ENCODE measurements at regions of chr7 and their contacts with region 1.

Region 1: GRCh38 chr7:6160191-6160623 is 112.2 kb downstream of the CYTH3 start:
- DNase-seq: peak; percentile 69
- H3K4me3 ChIP-seq: peak overlapping the region; percentile 22
- H3K27ac ChIP-seq: peak overlapping the region; percentile 87
- H3K4me1 ChIP-seq: peaks cover 60% of the 10 kb centered on the region
- H3K27me3 ChIP-seq: no peaks in the 10 kb centered on the region
- CTCF ChIP-seq: peak; percentile 84

Region 2: GRCh38 chr7:5755704-5756504 is 404.3 kb before region 1 on chr7:
- intact Hi-C with region 1: no loop called
- DNase-seq: no peak
- H3K4me3 ChIP-seq: no peak overlapping the region
- H3K27ac ChIP-seq: no peak overlapping the region
- H3K4me1 ChIP-seq: peaks cover 8% of the 10 kb centered on the region
- H3K27me3 ChIP-seq: no peaks in the 10 kb centered on the region
- CTCF ChIP-seq: no peak

Region 3: DNA sequence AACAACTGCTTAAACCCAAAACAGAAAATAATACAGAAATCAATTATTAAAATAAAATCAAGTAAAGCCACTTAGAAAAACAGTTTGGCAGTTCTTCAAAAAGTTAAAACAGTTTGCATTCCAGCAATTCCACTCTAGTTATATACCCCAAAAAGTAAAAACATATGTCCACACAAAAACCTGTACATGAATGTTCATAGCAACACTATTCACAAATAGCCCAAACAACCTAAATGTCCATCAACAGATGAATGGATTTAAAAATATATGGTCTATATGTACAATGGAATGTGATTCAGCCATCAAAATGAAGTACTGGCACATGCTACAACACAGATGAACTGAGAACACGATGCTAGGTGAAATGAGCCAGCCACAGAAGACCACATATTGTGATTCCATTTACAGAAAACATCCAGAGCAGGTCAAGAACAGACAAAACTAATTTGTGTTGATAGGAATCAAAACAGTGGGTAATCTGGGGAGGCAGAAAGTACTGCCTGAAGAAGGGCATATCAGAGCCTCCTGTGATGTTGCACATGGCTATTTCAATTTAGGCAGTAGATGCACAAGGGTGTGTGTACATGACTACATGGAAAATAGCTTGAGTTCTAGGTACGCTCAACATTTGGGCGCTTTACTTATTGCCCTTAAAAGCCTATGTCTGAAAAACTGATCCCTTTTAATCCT is 45.9 kb after region 1 on chr7:
- intact Hi-C with region 1: no loop called
- DNase-seq: no peak
- H3K4me3 ChIP-seq: no peak overlapping the region
- H3K27ac ChIP-seq: peak overlapping the region; percentile 25
- H3K4me1 ChIP-seq: peaks cover 71% of the 10 kb centered on the region
- H3K27me3 ChIP-seq: no peaks in the 10 kb centered on the region
- CTCF ChIP-seq: no peak

Region 4: DNA sequence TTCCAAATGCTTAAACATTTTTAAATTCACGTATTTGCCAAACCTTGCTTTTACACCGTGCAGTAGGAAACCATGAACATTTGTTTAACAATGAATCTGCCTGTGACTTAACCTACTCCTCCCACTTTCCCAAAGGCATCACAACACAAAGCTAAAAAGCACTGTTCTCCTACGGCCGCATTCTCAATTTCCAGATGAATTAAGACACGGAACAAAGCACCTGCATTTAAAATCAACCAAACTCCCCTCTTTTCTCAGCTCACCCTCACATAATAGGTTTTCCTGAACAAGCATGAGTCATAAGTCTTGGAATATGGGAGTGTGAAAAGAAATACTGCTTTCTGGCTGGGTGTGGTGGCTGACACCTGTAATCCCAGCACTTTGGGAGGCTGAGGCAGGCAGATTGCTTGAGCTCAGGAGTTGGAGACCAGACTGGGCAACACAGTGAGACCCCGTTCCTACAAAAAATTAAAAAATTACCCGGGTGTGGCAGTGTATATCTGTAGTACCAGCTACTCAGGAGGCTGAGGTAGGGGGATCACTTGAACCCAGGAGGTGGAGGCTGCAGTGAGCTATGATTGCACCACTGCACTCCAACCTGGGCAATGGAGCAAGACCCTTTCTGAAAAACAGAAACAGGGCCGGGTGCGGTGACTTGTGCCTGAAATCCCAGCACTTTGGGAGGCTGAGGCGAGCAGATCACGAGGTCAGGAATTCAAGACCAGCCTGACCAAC is 163.9 kb after region 1 on chr7:
- intact Hi-C with region 1: loop called (anchors 5 kb)
- DNase-seq: no peak
- H3K4me3 ChIP-seq: no peak overlapping the region
- H3K27ac ChIP-seq: no peak overlapping the region
- H3K4me1 ChIP-seq: no peaks in the 10 kb centered on the region
- H3K27me3 ChIP-seq: no peaks in the 10 kb centered on the region
- CTCF ChIP-seq: no peak

Region 5: GRCh38 chr7:6505685-6506574 is 345.7 kb after region 1 on chr7:
- intact Hi-C with region 1: no loop called
- DNase-seq: no peak
- H3K4me3 ChIP-seq: no peak overlapping the region
- H3K27ac ChIP-seq: no peak overlapping the region
- H3K4me1 ChIP-seq: peaks cover 20% of the 10 kb centered on the region
- H3K27me3 ChIP-seq: no peaks in the 10 kb centered on the region
- CTCF ChIP-seq: no peak

Measured in left ventricle myocardium inferior (tissue), 1 donor.